Calu3 (cell line): ENCODE measurements at regions of chr11 and their contacts with region 1.

Region 1: GRCh38 chr11:14471127-14471526 is 28.5 kb downstream of the COPB1 start:
- DNase-seq: no peak
- H3K4me3 Mint-ChIP-seq: no peak overlapping the region
- H3K27ac Mint-ChIP-seq: peak overlapping the region; percentile 22
- H3K4me1 Mint-ChIP-seq: peaks cover 5% of the 10 kb centered on the region
- H3K27me3 Mint-ChIP-seq: no peaks in the 10 kb centered on the region
- CTCF ChIP-seq: no peak

Region 2: GRCh38 chr11:14261066-14261465 is 210.1 kb before region 1 on chr11:
- CTCF ChIA-PET with region 1: interaction called, 10 read pairs
- intact Hi-C with region 1: no loop called
- DNase-seq: no peak
- H3K4me3 Mint-ChIP-seq: no peak overlapping the region
- H3K27ac Mint-ChIP-seq: no peak overlapping the region
- H3K4me1 Mint-ChIP-seq: peaks cover 15% of the 10 kb centered on the region
- H3K27me3 Mint-ChIP-seq: no peaks in the 10 kb centered on the region
- CTCF ChIP-seq: no peak